CD8-positive, alpha-beta memory T cell (primary cell): ENCODE measurements at regions of chr1 and their contacts with region 1.

Region 1: DNA sequence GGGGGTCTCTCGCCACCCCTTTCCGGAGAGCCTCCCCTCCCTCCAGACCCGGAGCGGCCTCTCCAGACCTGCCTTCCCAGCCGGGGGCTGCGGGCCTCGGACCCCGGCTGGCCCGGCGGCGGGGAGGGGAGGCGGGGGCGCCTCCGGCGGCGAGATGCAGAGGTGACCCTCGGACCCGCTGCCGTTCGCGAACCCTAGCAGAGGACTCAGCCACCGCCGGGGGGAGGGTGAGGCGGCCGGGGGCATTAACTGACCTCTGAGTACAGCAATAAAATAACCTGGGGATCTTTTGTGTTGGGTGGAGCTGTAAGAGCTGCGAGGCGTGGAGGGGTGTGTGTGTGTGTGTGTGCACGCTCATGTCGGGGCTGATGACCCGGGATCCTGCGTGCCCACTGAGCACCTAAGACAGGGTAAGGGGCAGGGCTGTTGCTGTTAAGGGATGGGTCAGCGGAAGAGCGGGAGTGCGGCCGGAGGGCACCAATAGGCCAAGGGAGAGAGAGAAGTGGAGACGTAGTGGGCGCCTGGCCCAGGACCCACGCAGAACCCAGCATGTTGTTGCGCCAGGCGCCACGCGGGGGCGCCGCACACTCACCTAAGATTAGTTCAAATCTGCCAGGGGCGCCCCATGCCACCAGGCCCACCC is 6.3 kb downstream of the HAPLN2 start:
- DNase-seq: peak; percentile 45 to 72 (median 59)
- H3K4me3 ChIP-seq: peak overlapping the region; percentile 32
- H3K4me3 Mint-ChIP-seq: peak overlapping the region; percentile 38 to 89 (median 80)
- H3K27ac ChIP-seq: peak overlapping the region; percentile 35
- H3K27ac Mint-ChIP-seq: peak overlapping the region in 4 of 8 donors; percentile 10 to 45 (median 18)
- H3K4me1 ChIP-seq: peaks cover 18% of the 10 kb centered on the region
- H3K4me1 Mint-ChIP-seq: peaks cover 8 to 18% (median 8%) of the 10 kb centered on the region in 3 donors
- H3K27me3 ChIP-seq: peaks cover 36% of the 10 kb centered on the region
- H3K27me3 Mint-ChIP-seq: peaks cover 35 to 54% of the 10 kb centered on the region in 2 donors

Region 2: GRCh38 chr1:156608036-156608674 is 17.4 kb before region 1 on chr1:
- CTCF ChIA-PET with region 1: interaction called, 39 read pairs
- POLR2A ChIA-PET with region 1: no interaction called
- DNase-seq: peak; percentile 32 to 73 (median 62)
- H3K4me3 ChIP-seq: no peak overlapping the region
- H3K4me3 Mint-ChIP-seq: peak overlapping the region in 2 of 7 donors; percentile 25 to 41
- H3K27ac ChIP-seq: no peak overlapping the region
- H3K27ac Mint-ChIP-seq: no peak overlapping the region
- H3K4me1 ChIP-seq: peaks cover 10% of the 10 kb centered on the region
- H3K4me1 Mint-ChIP-seq: peaks cover 6 to 15% (median 9%) of the 10 kb centered on the region in 3 donors
- H3K27me3 ChIP-seq: no peaks in the 10 kb centered on the region
- H3K27me3 Mint-ChIP-seq: peaks cover 5 to 26% of the 10 kb centered on the region in 2 donors

Region 3: GRCh38 chr1:156648951-156649350 is 23.4 kb after region 1 on chr1:
- CTCF ChIA-PET with region 1: interaction called, 15 read pairs
- POLR2A ChIA-PET with region 1: no interaction called
- DNase-seq: no peak
- H3K4me3 ChIP-seq: no peak overlapping the region
- H3K4me3 Mint-ChIP-seq: no peak overlapping the region
- H3K27ac ChIP-seq: no peak overlapping the region
- H3K27ac Mint-ChIP-seq: no peak overlapping the region
- H3K4me1 ChIP-seq: peaks cover 5% of the 10 kb centered on the region
- H3K4me1 Mint-ChIP-seq: peaks cover 0 to 5% (median under 1%) of the 10 kb centered on the region in 3 donors
- H3K27me3 ChIP-seq: peaks cover 16% of the 10 kb centered on the region
- H3K27me3 Mint-ChIP-seq: peaks cover 55 to 82% of the 10 kb centered on the region in 2 donors

Region 4: GRCh38 chr1:156659994-156660751 is 34.6 kb after region 1 on chr1:
- CTCF ChIA-PET with region 1: interaction called, 93 read pairs
- POLR2A ChIA-PET with region 1: no interaction called
- DNase-seq: peak; percentile 85 to 92 (median 88)
- H3K4me3 ChIP-seq: peak overlapping the region; percentile 36
- H3K4me3 Mint-ChIP-seq: peak overlapping the region; percentile 24 to 75 (median 62)
- H3K27ac ChIP-seq: peak overlapping the region; percentile 80
- H3K27ac Mint-ChIP-seq: peak overlapping the region; percentile 11 to 86 (median 74)
- H3K4me1 ChIP-seq: peaks cover 58% of the 10 kb centered on the region
- H3K4me1 Mint-ChIP-seq: peaks cover 35 to 60% (median 44%) of the 10 kb centered on the region in 3 donors
- H3K27me3 ChIP-seq: peaks cover 22% of the 10 kb centered on the region
- H3K27me3 Mint-ChIP-seq: peaks cover 17 to 23% of the 10 kb centered on the region in 2 donors